Mammary epithelial cell (primary cell): ENCODE measurements at regions of chr22 and their contacts with region 1.

Region 1: DNA sequence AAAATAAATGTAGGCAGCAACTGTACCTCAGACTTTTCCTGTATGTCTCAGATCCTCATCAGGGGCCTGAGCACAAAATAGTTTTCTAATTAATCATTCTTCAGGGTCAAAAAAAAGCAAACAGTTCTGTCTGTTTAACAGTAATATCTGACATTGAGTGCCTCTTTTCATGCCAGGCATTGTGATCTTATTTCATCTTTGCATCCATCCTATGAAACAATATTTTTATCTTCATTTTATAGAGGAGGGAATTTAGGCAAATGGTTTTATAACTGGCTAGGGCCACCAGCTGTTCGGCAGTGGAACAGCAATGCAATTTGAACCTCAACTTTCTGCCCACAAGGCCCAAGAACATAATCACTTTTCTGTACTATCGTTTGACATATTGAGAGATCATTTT is 145.6 kb downstream of the WNT7B start:
- DNase-seq: no peak
- H3K4me3 ChIP-seq: no peak overlapping the region
- H3K27ac ChIP-seq: no peak overlapping the region
- H3K4me1 ChIP-seq: peaks cover 30% of the 10 kb centered on the region
- H3K27me3 ChIP-seq: no peaks in the 10 kb centered on the region
- CTCF ChIP-seq: peak; percentile 15 to 46

Region 2: GRCh38 chr22:45763236-45763624 is 68.2 kb before region 1 on chr22:
- CTCF ChIA-PET with region 1: no interaction called
- dilution Hi-C with region 1: loop called (anchors 5 kb)
- in situ Hi-C with region 1: no loop called
- intact Hi-C with region 1: no loop called
- DNase-seq: no peak
- H3K4me3 ChIP-seq: no peak overlapping the region
- H3K27ac ChIP-seq: no peak overlapping the region
- H3K4me1 ChIP-seq: no peaks in the 10 kb centered on the region
- H3K27me3 ChIP-seq: no peaks in the 10 kb centered on the region
- CTCF ChIP-seq: no peak